ENCODE measurements at regions of chr18 and their contacts with region 1.

Region 1: GRCh38 chr18:57107140-57107832 is 39.6 kb upstream of the BOD1L2 start:
- DNase-seq: peak; percentile 65
- ATAC-seq: peak; percentile 37; the same call in 1 of the 2 replicates
- H3K4me3 ChIP-seq: no peak overlapping the region
- H3K27ac ChIP-seq: no peak overlapping the region
- H3K4me1 ChIP-seq: 0 out of 2 replicates have a peak, but pooled peaks cover 4% of the 10 kb centered on the region
- H3K27me3 ChIP-seq: no peaks in the 10 kb centered on the region
- CTCF ChIP-seq: no peak

Region 2: DNA sequence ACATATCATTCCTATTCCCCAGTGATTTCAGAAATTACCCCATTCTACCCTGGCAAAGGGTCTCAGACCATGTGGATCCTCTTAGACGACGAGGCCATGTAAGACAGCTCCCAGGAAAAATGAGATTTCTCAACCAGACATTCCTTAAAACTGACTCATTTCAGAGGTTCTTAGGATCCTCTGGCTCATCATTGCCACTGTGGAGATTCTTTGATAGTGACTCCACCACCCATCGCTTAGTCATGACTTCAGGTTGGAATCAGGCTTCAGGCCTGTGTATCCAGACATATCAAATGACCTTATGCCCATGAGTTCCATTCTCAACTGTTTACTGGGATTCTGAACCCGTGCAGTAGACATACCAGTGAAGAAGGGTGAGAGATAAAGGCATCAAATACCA is 1273.7 kb before region 1 on chr18:
- CTCF ChIA-PET with region 1: no interaction called
- POLR2A ChIA-PET with region 1: interaction called, 18 read pairs
- intact Hi-C with region 1: no loop called
- DNase-seq: peak; percentile 98
- ATAC-seq: peak; percentile 100
- H3K4me3 ChIP-seq: no peak overlapping the region
- H3K27ac ChIP-seq: peak overlapping the region; percentile 50
- H3K4me1 ChIP-seq: peaks cover 10% of the 10 kb centered on the region
- H3K27me3 ChIP-seq: no peaks in the 10 kb centered on the region
- CTCF ChIP-seq: no peak

Region 3: DNA sequence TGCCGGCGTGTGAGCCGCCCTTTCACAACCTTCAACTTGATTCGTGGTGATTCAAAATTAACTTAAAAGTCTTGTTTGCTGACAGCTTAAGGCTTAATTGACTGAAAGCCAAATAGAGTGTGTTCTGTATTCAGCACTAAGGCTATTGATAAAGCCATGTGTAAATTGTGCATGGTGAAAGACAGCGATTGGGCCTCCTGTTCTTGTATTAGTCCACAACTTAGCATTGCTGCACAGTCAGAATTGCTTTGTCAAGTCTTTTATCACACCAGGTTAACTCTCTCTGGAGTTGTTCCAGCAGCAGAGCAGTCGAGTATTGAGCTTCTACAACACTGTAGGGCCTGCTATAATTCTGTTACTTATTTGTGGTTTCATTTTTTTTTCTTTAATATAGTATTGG is 246.0 kb before region 1 on chr18:
- CTCF ChIA-PET with region 1: no interaction called
- POLR2A ChIA-PET with region 1: no interaction called
- intact Hi-C with region 1: no loop called
- DNase-seq: no peak
- ATAC-seq: no peak
- H3K4me3 ChIP-seq: no peak overlapping the region
- H3K27ac ChIP-seq: no peak overlapping the region
- H3K4me1 ChIP-seq: no peaks in the 10 kb centered on the region
- H3K27me3 ChIP-seq: no peaks in the 10 kb centered on the region
- CTCF ChIP-seq: no peak